ENCODE measurements at regions of chr2 and their contacts with region 1.

Region 1: DNA sequence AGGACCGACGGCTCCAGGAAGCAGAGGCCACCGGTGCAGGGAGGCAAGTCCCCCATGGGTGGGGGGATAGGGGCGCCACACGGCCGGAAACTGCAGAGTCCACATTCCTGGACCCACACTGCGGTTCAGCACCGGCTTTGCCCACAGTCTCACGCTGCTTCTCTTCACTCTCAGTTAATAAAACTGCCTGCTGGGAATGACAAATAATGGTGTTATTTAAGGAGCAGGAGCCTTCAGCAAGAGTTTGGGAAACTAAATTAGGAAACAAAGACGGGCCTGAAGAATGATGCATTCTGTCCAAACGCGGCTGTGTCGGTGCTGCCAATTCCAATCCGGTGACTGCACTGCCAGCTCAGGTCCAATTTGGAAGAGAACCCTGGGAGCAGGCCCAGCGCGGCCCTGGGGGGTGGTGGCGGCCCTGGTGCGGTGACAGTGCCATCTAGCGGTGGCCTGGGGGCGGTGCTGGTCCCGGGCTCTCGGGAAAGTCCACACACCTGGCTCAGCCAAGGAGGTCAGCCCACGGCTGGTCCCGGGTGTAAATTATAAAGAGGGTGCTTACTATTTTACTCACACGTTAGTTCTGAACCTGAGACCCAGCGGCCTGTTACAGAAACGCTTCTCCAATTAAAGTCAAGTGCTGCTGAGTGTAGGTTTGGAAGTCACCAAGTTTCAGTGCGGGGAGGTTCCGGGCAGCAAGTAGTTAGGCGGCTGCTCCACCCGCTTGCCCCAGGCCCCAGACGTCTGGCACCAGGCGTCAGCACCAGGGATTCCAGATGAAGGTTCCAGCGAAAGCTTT is 73.1 kb upstream of the PXDN start:
- DNase-seq: peak; percentile 86
- ATAC-seq: peak; percentile 89
- H3K4me3 Mint-ChIP-seq: no peak overlapping the region
- H3K27ac Mint-ChIP-seq: no peak overlapping the region
- H3K4me1 Mint-ChIP-seq: peaks cover 13% of the 10 kb centered on the region
- H3K27me3 Mint-ChIP-seq: peaks cover 5% of the 10 kb centered on the region
- CTCF ChIP-seq: peak; percentile 94

Region 2: GRCh38 chr2:1730015-1730927 is 87.2 kb before region 1 on chr2:
- CTCF ChIA-PET with region 1: interaction called, 10 read pairs
- POLR2A ChIA-PET with region 1: no interaction called
- DNase-seq: peak; percentile 38
- ATAC-seq: peak; percentile 86
- H3K4me3 Mint-ChIP-seq: peak overlapping the region; percentile 18; the same call in 1 of the 2 replicates
- H3K27ac Mint-ChIP-seq: peak overlapping the region; percentile 88
- H3K4me1 Mint-ChIP-seq: peaks cover 60% of the 10 kb centered on the region
- H3K27me3 Mint-ChIP-seq: no peaks in the 10 kb centered on the region; the same call in 1 of the 2 replicates
- CTCF ChIP-seq: no peak

Region 3: GRCh38 chr2:1781271-1782080 is 36.0 kb before region 1 on chr2:
- CTCF ChIA-PET with region 1: interaction called, 10 read pairs
- POLR2A ChIA-PET with region 1: no interaction called
- DNase-seq: no peak
- ATAC-seq: peak; percentile 62
- H3K4me3 Mint-ChIP-seq: no peak overlapping the region
- H3K27ac Mint-ChIP-seq: no peak overlapping the region
- H3K4me1 Mint-ChIP-seq: peaks cover 13% of the 10 kb centered on the region
- H3K27me3 Mint-ChIP-seq: no peaks in the 10 kb centered on the region
- CTCF ChIP-seq: no peak

Region 4: DNA sequence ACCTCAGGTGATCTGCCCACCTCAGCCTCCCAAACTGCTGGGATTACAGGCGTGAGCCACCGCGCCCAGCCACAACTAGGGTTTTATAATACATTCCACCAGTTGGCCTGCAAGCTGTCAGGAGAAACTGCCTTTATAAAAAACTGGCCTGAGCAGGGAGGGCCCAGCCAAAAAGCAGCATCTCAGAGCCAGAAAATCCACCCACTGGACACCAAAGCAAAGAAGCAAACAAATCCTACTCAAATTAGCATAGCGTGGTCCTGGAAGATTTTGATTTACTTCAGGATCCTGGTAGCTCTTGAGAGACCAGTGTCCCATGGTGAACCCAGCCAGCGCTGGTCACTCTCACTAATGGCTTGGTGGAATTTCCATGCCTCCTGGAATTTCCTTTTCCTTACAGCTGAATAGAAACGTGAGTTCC is 13.1 kb before region 1 on chr2:
- CTCF ChIA-PET with region 1: interaction called, 17 read pairs
- POLR2A ChIA-PET with region 1: no interaction called
- DNase-seq: no peak
- ATAC-seq: no peak
- H3K4me3 Mint-ChIP-seq: no peak overlapping the region
- H3K27ac Mint-ChIP-seq: no peak overlapping the region
- H3K4me1 Mint-ChIP-seq: no peaks in the 10 kb centered on the region
- H3K27me3 Mint-ChIP-seq: no peaks in the 10 kb centered on the region; the same call in 1 of the 2 replicates
- CTCF ChIP-seq: no peak

Measured in WTC11 (cell line).